ENCODE measurements at regions of chr19 and their contacts with region 1.

Region 1: GRCh38 chr19:34345947-34346351 is 19.0 kb upstream of the GPI start:
- DNase-seq: peak; percentile 33 to 75 (median 56)
- H3K4me3 ChIP-seq: no peak overlapping the region
- H3K4me3 Mint-ChIP-seq: no peak overlapping the region
- H3K27ac ChIP-seq: no peak overlapping the region
- H3K27ac Mint-ChIP-seq: peak overlapping the region in 6 of 8 donors; percentile 1 to 83 (median 74)
- H3K4me1 ChIP-seq: peaks cover 17% of the 10 kb centered on the region
- H3K4me1 Mint-ChIP-seq: peaks cover 18 to 26% (median 22%) of the 10 kb centered on the region in 3 donors
- H3K27me3 ChIP-seq: no peaks in the 10 kb centered on the region
- H3K27me3 Mint-ChIP-seq: no peaks in the 10 kb centered on the region

Region 2: GRCh38 chr19:34364830-34365462 is 19.0 kb after region 1 on chr19 and contains the start of gene GPI:
- CTCF ChIA-PET with region 1: interaction called, 10 read pairs
- POLR2A ChIA-PET with region 1: no interaction called
- DNase-seq: peak; percentile 52 to 74 (median 57)
- H3K4me3 ChIP-seq: peak within 1 kb of the TSS; percentile 92
- H3K4me3 Mint-ChIP-seq: peak within 1 kb of the TSS; percentile 95 to 99 (median 96)
- H3K27ac ChIP-seq: peak within 1 kb of the TSS; percentile 81
- H3K27ac Mint-ChIP-seq: peak within 1 kb of the TSS; percentile 80 to 96 (median 92)
- H3K4me1 ChIP-seq: peaks cover 32% of the 10 kb centered on the region
- H3K4me1 Mint-ChIP-seq: peaks cover 33 to 43% (median 33%) of the 10 kb centered on the region in 3 donors
- H3K27me3 ChIP-seq: no peaks in the 10 kb centered on the region
- H3K27me3 Mint-ChIP-seq: no peaks in the 10 kb centered on the region
- total RNA-seq, gene GPI: 478 to 484 TPM

Region 3: GRCh38 chr19:34375598-34375997 is 29.6 kb after region 1 on chr19:
- CTCF ChIA-PET with region 1: no interaction called
- POLR2A ChIA-PET with region 1: no interaction called
- DNase-seq: no peak
- H3K4me3 ChIP-seq: no peak overlapping the region
- H3K4me3 Mint-ChIP-seq: no peak overlapping the region
- H3K27ac ChIP-seq: no peak overlapping the region
- H3K27ac Mint-ChIP-seq: peak overlapping the region in 1 of 8 donors; percentile 71
- H3K4me1 ChIP-seq: no peaks in the 10 kb centered on the region
- H3K4me1 Mint-ChIP-seq: peaks cover 8 to 23% (median 12%) of the 10 kb centered on the region in 3 donors
- H3K27me3 ChIP-seq: no peaks in the 10 kb centered on the region
- H3K27me3 Mint-ChIP-seq: no peaks in the 10 kb centered on the region